ENCODE measurements at regions of chr19 and their contacts with region 1.

Region 1: GRCh38 chr19:12983542-12984142 is 11.6 kb upstream of the NFIX start:
- H3K4me3 ChIP-seq: peak overlapping the region; percentile 16
- H3K27ac ChIP-seq: no peak overlapping the region
- H3K4me1 ChIP-seq: no peaks in the 10 kb centered on the region
- CTCF ChIP-seq: peak; percentile 96

Region 2: GRCh38 chr19:12899891-12900518 is 83.6 kb before region 1 on chr19:
- CTCF ChIA-PET with region 1: no interaction called
- POLR2A ChIA-PET with region 1: no interaction called
- H3K4me3 ChIP-seq: no peak overlapping the region
- H3K27ac ChIP-seq: no peak overlapping the region
- H3K4me1 ChIP-seq: no peaks in the 10 kb centered on the region
- CTCF ChIP-seq: no peak

Region 3: DNA sequence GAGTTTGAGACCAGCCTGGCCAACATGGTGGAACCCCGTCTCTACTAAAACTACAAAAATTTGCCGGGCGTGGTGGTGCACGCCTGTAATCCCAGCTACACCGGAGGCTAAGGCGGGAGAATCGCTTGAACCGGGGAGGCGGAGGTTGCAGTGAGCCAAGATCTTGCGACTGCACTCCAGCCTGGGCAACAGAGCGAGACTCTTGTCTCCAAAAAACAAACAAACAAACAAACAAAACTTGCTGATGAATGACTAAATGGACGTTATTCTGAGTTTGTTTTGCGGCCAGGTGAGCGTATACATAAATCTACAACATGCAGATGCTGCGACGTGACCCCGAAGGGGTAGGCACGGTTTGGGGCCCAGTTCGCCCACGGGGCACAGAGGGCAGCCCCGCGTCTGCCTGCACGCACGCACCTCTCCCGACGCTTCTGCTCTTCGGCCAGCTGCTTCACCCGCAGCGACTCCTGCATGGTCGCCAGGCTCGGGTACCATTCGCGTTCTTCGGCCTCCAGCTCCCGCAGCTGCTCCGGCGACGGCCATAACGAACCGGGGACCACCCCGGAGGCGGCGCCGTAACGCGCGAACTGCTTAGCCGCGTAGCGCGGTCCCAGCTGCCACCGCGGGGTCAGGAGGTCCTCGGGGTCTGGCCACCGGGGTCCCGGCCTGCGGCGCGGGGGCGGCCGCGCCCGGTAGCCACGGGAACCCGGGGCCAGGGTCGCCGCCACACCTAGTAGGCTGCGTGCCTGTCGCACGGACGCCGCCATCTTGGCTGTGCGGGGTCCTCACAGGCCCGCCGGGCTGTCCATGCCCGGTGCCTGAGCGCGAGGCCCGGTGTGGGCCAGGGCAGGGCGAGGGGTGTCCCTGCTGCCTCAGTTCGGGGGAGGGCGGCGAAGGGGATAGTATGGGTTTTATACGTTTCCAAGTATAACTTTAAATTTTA is 26.9 kb before region 1 on chr19 and contains the start of gene GADD45GIP1:
- CTCF ChIA-PET with region 1: no interaction called
- POLR2A ChIA-PET with region 1: no interaction called
- H3K4me3 ChIP-seq: peak within 1 kb of the TSS; percentile 74
- H3K27ac ChIP-seq: peak within 1 kb of the TSS; percentile 63
- H3K4me1 ChIP-seq: peaks cover 10% of the 10 kb centered on the region
- CTCF ChIP-seq: no peak

Region 4: GRCh38 chr19:13069415-13070359 is 86.0 kb after region 1 on chr19:
- CTCF ChIA-PET with region 1: interaction called, 13 read pairs
- POLR2A ChIA-PET with region 1: no interaction called
- H3K4me3 ChIP-seq: no peak overlapping the region
- H3K27ac ChIP-seq: no peak overlapping the region
- H3K4me1 ChIP-seq: no peaks in the 10 kb centered on the region; the same call in 1 of the 2 replicates
- CTCF ChIP-seq: no peak

Region 5: DNA sequence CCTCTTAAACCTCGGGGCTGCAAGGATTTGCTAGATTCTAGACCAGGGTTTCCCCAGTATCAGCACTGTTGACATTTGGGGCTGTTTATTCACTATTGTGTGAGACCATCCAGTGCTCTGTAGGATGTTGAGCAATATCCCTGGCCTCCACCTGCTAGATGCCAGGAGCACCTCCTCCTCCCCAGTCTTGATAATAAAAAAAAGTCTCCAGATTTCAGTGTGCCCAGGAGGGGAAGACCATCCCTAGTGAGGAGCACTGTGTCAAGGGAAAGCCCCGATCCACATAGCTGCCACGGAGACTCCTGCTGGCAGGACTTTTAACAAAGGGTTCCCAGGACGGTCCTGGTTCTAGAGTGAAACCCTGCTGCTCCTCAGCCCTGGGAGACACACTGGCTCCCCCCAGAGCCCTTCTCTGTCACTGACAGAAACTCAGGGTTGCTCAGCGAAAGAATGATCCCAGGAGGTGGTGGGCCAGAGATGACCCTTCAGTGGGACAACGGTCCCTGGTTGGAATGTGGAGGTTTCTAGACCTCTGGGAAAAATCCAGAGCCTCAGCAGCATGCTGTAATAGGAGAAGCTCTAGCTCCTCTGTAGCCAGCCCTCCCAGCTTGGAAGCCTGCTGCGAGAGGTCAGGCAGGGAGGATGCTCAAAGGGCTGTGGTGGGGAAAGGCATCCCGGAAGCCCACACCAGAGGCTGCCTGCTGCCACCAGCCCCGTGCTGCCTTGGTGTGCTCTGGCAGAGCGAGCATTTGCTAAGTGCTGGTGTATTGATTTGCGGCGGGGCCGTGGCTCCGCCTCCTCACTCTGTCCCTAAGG is 98.8 kb after region 1 on chr19:
- CTCF ChIA-PET with region 1: interaction called, 14 read pairs
- POLR2A ChIA-PET with region 1: interaction called, 3 read pairs
- H3K4me3 ChIP-seq: no peak overlapping the region
- H3K27ac ChIP-seq: no peak overlapping the region
- H3K4me1 ChIP-seq: peaks cover 14% of the 10 kb centered on the region
- CTCF ChIP-seq: peak; percentile 18; the same call in 1 of the 2 replicates

Region 6: GRCh38 chr19:13117772-13118423 is 134.3 kb after region 1 on chr19 and contains the start of gene NACC1:
- CTCF ChIA-PET with region 1: interaction called, 13 read pairs
- POLR2A ChIA-PET with region 1: no interaction called
- H3K4me3 ChIP-seq: peak within 1 kb of the TSS; percentile 93
- H3K27ac ChIP-seq: peak within 1 kb of the TSS; percentile 98
- H3K4me1 ChIP-seq: peaks cover 7% of the 10 kb centered on the region
- CTCF ChIP-seq: no peak; the same call in 1 of the 2 replicates

Region 7: GRCh38 chr19:13262450-13262849 is 278.8 kb after region 1 on chr19:
- CTCF ChIA-PET with region 1: interaction called, 17 read pairs
- POLR2A ChIA-PET with region 1: no interaction called
- H3K4me3 ChIP-seq: no peak overlapping the region
- H3K27ac ChIP-seq: no peak overlapping the region
- H3K4me1 ChIP-seq: no peaks in the 10 kb centered on the region
- CTCF ChIP-seq: peak; percentile 23; the same call in 1 of the 2 replicates